Head of caudate nucleus (tissue), 42 donors: ENCODE measurements at regions of chr11 and their contacts with region 1.

Region 1: GRCh38 chr11:101848262-101848661 is 66.5 kb upstream of the CEP126 start:
- DNase-seq: peak in 1 of 42 donors; percentile 9

Region 2: GRCh38 chr11:101456812-101457211 is 391.4 kb before region 1 on chr11:
- intact Hi-C with region 1: loop called (anchors 10 kb)
- DNase-seq: no peak

Region 3: DNA sequence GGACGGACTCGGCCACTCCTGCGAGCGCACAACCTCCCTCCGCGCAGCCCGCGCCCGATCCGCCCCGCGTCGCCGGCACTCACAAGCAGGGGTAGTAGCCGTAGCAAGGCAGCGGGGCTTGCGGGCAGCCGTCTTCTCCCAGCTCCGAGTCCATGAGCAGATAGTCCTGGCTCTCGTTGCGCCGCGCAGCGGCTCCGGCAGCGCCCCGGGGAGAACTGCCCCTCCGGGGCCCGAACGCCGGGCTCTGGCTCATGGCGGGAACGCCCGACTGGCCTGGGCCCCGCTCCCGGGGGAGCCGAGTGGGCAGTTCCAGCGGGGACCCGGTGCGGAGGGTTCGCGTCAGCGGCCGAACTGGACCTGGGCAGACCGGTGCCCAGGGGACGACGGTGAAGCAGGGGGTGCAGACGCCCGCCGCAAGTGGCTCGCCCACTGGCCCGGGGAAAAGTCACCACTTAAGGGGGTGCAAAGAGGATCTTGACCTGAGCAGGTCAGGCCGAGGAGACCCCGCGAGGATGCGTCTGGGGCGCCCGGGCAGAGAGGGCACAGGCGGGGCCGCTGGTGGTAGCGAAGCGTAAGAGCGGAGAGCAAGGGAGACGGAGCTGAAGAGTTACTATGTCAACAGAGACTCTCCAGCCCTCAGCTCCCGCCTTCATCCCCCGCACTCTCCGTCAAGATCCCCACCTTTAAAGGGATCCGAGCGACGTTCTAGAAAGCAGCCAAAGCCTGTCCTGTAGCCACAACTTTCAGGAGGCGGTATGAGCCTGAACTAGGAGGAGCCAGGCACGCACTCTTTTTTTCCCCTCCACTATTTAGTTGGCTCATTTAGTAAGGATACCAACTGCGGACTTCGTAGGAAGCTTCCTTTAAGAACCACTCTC is 264.8 kb before region 1 on chr11 and contains the start of gene TRPC6:
- intact Hi-C with region 1: no loop called
- DNase-seq: peak in 11 of 42 donors; percentile 2 to 38 (median 16)